Head of caudate nucleus (tissue), 42 donors: ENCODE measurements at regions of chr13 and their contacts with region 1.

Region 1: GRCh38 chr13:75482070-75482819 is at the start of gene TBC1D4:
- DNase-seq: peak; percentile 49 to 91 (median 84)

Region 2: GRCh38 chr13:75341028-75341427 is 141.2 kb before region 1 on chr13:
- intact Hi-C with region 1: no loop called
- DNase-seq: no peak

Region 3: GRCh38 chr13:75549262-75550158 is 67.3 kb after region 1 on chr13 and contains the start of gene UCHL3:
- intact Hi-C with region 1: loop called (anchors 5 kb)
- DNase-seq: peak; percentile 91 to 98 (median 96)